IMR-90 (cell line): ENCODE measurements at regions of chr10 and their contacts with region 1.

Region 1: GRCh38 chr10:44981172-44982113 is 2.8 kb upstream of the DEPP1 start:
- DNase-seq: peak; percentile 92
- ATAC-seq: peak; percentile 90
- H3K4me3 ChIP-seq: no peak overlapping the region
- H3K27ac ChIP-seq: peak overlapping the region; percentile 98
- H3K4me1 ChIP-seq: peaks cover 73% of the 10 kb centered on the region
- H3K27me3 ChIP-seq: no peaks in the 10 kb centered on the region
- CTCF ChIP-seq: no peak
- POLR2A ChIP-seq: peak; percentile 34; the same call in 1 of the 2 replicates
- RAD21 ChIP-seq: no peak

Region 2: GRCh38 chr10:45000752-45001380 is 19.4 kb after region 1 on chr10 and contains the start of gene ZNF22:
- CTCF ChIA-PET with region 1: interaction called, 4 read pairs
- POLR2A ChIA-PET with region 1: interaction called, 3 read pairs
- dilution Hi-C with region 1: no loop called
- in situ Hi-C with region 1: no loop called
- intact Hi-C with region 1: loop called (anchors 2 kb)
- DNase-seq: peak; percentile 56
- ATAC-seq: peak; percentile 82
- H3K4me3 ChIP-seq: peak within 1 kb of the TSS; percentile 51
- H3K27ac ChIP-seq: peak within 1 kb of the TSS; percentile 74
- H3K4me1 ChIP-seq: peaks cover 21% of the 10 kb centered on the region
- H3K27me3 ChIP-seq: no peaks in the 10 kb centered on the region
- CTCF ChIP-seq: 0 out of 2 replicates have a peak, but pooled peaks have one; percentile 6
- POLR2A ChIP-seq: peak; percentile 68; the same call in 1 of the 2 replicates
- RAD21 ChIP-seq: no peak
- total RNA-seq, gene ZNF22: 12.4 and 18.6 TPM in 2 replicates